Right ventricle myocardium superior (tissue), 1 donor: ENCODE measurements at regions of chr1 and their contacts with region 1.

Region 1: DNA sequence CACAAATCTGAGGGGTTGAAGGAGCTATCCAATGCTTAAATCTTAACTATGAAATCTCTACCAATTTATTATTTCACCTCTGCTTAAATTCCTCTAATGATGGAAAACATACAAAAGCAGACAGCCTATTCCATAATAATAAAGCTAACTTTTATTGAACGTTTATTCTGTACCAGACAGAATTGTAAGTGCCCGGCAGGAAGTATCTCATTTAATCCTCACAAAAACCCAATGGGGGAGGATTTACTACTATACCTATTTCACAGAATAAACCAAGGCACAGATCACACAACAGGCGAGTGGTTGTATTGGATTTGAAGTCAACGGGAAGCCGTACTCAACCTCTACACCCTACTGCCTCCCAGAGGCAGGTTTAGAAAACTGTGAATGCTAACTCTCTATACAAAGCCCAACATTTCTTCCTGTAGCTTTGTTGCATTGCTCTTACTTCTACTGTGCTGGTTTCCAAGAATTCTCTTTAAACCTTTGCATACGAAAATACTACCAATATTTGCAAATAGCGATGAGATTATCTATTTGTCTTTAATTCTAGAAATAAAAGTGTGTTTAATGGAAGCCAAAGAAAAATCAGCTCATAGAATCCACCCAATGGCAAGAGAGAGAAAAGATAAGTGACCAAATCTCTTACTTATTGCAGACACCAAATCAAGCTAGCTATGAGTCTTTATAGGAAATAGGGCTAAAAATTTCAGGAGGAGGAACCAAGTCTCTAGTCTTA is 33.5 kb upstream of the C1orf53 start:
- DNase-seq: no peak
- ATAC-seq: peak; percentile 81

Region 2: DNA sequence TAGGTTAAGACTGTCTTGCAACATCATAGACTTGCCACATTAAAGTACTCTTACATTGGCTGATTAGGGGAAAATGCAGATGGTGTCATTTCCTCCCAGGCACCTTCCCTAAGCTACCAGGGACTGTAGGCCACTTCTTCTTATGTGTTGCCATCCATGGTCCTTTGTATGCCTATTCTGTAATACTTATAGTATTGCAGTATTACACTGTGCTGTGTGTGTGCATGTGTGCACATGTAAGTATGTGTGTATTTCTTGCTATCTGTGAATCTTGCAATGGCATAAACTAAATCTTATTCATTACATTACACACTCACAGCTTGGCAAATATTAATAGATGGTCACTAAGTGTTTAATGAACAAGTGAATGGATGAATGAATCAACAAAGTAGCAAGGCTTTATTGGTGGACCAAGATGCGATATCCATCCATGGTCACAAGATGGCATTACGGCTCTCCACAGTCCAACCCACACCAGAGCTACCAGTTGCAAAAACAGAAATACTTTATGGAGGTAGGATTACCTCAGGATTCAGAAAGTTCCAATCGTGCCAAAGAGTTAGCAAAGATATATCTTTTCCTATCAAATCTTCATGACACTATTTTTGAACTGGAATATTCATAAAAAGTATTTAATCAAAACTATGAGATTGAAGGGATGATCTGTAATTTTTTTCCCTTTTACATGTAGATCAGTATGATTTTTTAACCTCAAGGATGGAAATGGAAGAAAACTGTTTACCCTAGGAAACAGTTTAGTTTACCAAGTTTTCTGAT is 253.8 kb before region 1 on chr1:
- intact Hi-C with region 1: loop called (anchors 2 kb)
- DNase-seq: no peak
- ATAC-seq: peak; percentile 77